ENCODE measurements at regions of chr22 and their contacts with region 1.

Region 1: GRCh38 chr22:36221799-36222751 is 17.3 kb downstream of the APOL2 start:
- H3K4me3 Mint-ChIP-seq: peak overlapping the region; percentile 63
- H3K27ac Mint-ChIP-seq: peak overlapping the region; percentile 41
- H3K4me1 Mint-ChIP-seq: peaks cover 53% of the 10 kb centered on the region
- H3K27me3 Mint-ChIP-seq: peaks cover 2% of the 10 kb centered on the region

Region 2: DNA sequence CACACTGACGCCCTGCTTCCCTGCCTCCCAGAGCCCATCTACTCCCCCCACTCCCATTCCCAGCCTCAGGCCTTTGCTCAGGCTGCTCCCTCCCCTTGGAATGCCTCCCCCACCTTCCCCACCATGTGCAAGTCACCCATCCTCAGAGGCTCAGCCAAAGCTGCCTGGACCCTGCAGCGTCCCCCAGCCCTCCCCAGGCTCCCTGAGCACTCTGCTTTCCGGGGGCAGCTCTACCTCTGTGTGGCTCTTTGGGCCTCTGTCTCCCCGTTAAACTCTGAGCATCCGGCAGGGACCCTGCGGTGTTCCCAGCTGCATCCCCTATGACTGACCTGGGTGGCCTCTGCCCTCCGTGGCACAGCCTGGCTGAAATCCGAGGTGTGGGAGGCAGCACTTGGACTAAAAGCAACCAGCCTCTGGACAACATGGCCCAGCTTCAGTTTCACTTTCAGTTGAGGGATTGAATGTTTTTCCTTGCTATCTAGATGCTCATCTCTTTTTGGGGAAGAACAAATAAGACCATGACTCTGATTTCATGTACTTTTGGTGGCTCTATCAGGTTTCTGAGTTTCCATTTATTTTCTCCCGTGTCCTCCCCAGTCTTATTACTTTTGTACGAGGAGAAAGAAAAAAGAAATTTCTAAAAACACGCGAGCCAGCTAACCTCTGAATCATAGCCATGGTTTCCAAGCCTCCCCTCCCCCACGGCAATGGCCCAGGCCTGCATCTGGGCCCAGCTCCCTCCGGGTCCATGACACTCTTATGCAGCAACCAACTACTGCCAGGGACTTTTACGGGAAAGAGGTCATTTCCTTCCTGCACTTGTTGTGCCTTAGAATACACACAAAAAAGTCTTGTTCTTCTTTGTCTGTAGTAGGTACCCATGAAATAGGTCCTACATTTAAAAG is 65.3 kb before region 1 on chr22:
- intact Hi-C with region 1: loop called (anchors 10 kb)
- H3K4me3 Mint-ChIP-seq: peak overlapping the region; percentile 87
- H3K27ac Mint-ChIP-seq: peak overlapping the region; percentile 97
- H3K4me1 Mint-ChIP-seq: peaks cover 76% of the 10 kb centered on the region
- H3K27me3 Mint-ChIP-seq: no peaks in the 10 kb centered on the region

Region 3: GRCh38 chr22:36180038-36180880 is 41.8 kb before region 1 on chr22:
- intact Hi-C with region 1: loop called (anchors 5 kb)
- H3K4me3 Mint-ChIP-seq: no peak overlapping the region
- H3K27ac Mint-ChIP-seq: no peak overlapping the region
- H3K4me1 Mint-ChIP-seq: peaks cover 6% of the 10 kb centered on the region
- H3K27me3 Mint-ChIP-seq: no peaks in the 10 kb centered on the region

Region 4: DNA sequence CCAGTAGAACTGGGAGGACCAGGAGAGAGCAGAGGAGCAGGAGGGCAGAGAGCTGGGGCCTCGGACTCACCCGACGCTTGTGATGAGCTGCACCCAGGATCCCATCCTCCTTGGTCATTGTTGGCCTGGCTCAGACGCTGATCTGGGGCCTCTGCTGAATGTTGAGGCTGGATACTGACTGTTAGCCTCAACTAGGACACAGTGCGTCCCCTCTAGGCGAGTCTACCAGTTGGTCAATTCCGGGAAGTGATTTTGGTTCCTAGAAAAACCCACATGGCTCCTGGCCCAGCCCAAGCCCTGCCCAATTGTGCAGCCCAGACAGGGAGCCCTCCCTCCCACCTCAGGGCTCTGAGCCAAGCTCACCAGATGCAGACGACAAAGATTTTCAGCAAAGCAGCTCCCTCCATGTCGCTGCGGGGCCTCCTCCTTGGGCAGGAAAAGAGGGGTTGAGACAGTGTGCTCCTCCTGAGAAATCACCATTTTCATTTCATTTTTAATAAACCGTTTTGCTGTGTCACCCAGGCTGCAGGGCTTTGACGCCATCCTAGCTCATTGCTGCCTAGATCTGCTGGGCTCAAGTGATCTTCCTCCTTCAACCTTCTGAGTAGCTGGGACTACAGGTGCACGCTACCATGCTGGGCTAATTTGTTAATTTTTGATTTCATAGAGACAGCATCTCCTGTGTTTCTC is 20.3 kb before region 1 on chr22 and contains the start of gene APOL4:
- intact Hi-C with region 1: loop called (anchors 2 kb)
- H3K4me3 Mint-ChIP-seq: peak within 1 kb of the TSS; percentile 81
- H3K27ac Mint-ChIP-seq: peak within 1 kb of the TSS; percentile 84
- H3K4me1 Mint-ChIP-seq: peaks cover 100% of the 10 kb centered on the region
- H3K27me3 Mint-ChIP-seq: no peaks in the 10 kb centered on the region

Measured in dendritic cell treated with granulocyte-macrophage colony-stimulating factor and Interleukin-4, amounts not matched to agents 40 ng/mL and 50 ng/mL, for 4 days (primary cell).